WTC11 (cell line): ENCODE measurements at regions of chr19 and their contacts with region 1.

Region 1: GRCh38 chr19:45439569-45440254 is 16.0 kb upstream of the ERCC1 start:
- DNase-seq: peak; percentile 79
- ATAC-seq: peak; percentile 7
- H3K4me3 Mint-ChIP-seq: peak overlapping the region; percentile 69
- H3K27ac Mint-ChIP-seq: no peak overlapping the region
- H3K4me1 Mint-ChIP-seq: peaks cover 26% of the 10 kb centered on the region
- H3K27me3 Mint-ChIP-seq: peaks cover 27% of the 10 kb centered on the region
- CTCF ChIP-seq: peak; percentile 100

Region 2: DNA sequence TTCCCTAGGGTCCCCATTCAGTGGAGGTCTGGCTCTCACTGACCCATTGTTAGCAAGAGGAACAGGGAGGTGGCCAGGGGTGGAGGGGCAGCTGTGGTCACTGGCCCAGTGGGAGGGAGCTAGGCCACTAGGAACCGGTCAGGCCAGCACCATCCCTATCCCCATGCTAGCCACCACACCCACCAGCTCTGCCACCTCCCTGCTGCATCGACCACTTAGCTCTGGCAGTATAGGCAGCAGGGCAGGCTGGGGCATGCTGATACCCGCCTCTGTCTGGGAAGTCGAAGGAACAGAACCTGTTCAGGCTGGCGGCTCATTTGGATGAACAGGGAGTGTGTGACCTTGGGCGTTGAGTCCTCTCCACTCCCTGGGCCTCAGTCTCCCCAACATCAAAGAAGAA is 39.5 kb before region 1 on chr19:
- CTCF ChIA-PET with region 1: interaction called, 17 read pairs
- POLR2A ChIA-PET with region 1: no interaction called
- DNase-seq: no peak
- ATAC-seq: no peak
- H3K4me3 Mint-ChIP-seq: no peak overlapping the region
- H3K27ac Mint-ChIP-seq: no peak overlapping the region
- H3K4me1 Mint-ChIP-seq: peaks cover 32% of the 10 kb centered on the region
- H3K27me3 Mint-ChIP-seq: peaks cover 42% of the 10 kb centered on the region
- CTCF ChIP-seq: no peak

Region 3: GRCh38 chr19:45423589-45424190 is 16.0 kb before region 1 on chr19 and contains the start of gene ERCC1:
- CTCF ChIA-PET with region 1: interaction called, 42 read pairs
- POLR2A ChIA-PET with region 1: interaction called, 5 read pairs
- DNase-seq: peak; percentile 100
- ATAC-seq: peak; percentile 90
- H3K4me3 Mint-ChIP-seq: peak within 1 kb of the TSS; percentile 93
- H3K27ac Mint-ChIP-seq: peak within 1 kb of the TSS; percentile 99
- H3K4me1 Mint-ChIP-seq: peaks cover 21% of the 10 kb centered on the region
- H3K27me3 Mint-ChIP-seq: no peaks in the 10 kb centered on the region
- CTCF ChIP-seq: no peak
- total RNA-seq, gene ERCC1: 43.7 to 60.6 TPM (median 60.1 TPM) in 3 replicates

Region 4: GRCh38 chr19:45469132-45469944 is 29.6 kb after region 1 on chr19:
- CTCF ChIA-PET with region 1: interaction called, 105 read pairs
- POLR2A ChIA-PET with region 1: interaction called, 4 read pairs
- DNase-seq: peak; percentile 94
- ATAC-seq: peak; percentile 75
- H3K4me3 Mint-ChIP-seq: peak overlapping the region; percentile 87
- H3K27ac Mint-ChIP-seq: peak overlapping the region; percentile 96
- H3K4me1 Mint-ChIP-seq: peaks cover 32% of the 10 kb centered on the region
- H3K27me3 Mint-ChIP-seq: peaks cover 81% of the 10 kb centered on the region
- CTCF ChIP-seq: no peak

Region 5: DNA sequence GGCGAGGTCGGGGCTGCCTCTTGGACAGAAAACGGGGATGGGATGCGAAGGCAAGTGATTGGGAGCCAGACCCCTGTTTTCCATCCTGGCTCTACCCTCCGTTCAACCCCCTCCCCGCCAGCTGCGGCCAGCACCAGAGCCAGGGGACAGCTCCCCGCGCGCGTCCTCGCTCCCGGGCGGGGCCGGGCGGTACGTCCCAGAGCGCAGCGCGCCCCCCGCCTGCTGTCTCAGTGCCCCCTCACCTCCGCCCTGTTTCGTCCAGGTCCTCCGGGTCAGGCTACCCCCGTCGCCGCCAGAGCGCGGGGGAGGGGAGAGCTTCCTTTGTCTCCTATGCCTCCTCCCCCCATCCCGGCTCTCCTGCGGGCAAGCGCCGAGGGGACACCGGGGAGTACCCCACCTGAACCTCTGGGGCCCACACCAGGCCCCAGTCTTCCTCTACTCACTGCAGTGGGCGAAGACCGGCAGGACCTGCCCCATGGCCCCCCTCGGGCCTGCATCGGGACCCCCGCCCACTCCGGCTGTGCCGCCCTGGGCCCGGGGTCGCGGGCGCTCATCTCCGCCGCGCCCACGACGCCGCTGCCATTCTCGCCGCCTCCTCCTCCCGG is 56.7 kb after region 1 on chr19:
- CTCF ChIA-PET with region 1: interaction called, 20 read pairs
- POLR2A ChIA-PET with region 1: no interaction called
- DNase-seq: peak; percentile 84
- ATAC-seq: peak; percentile 1
- H3K4me3 Mint-ChIP-seq: peak overlapping the region; percentile 63
- H3K27ac Mint-ChIP-seq: no peak overlapping the region
- H3K4me1 Mint-ChIP-seq: peaks cover 43% of the 10 kb centered on the region
- H3K27me3 Mint-ChIP-seq: peaks cover 39% of the 10 kb centered on the region
- CTCF ChIP-seq: no peak

Region 6: DNA sequence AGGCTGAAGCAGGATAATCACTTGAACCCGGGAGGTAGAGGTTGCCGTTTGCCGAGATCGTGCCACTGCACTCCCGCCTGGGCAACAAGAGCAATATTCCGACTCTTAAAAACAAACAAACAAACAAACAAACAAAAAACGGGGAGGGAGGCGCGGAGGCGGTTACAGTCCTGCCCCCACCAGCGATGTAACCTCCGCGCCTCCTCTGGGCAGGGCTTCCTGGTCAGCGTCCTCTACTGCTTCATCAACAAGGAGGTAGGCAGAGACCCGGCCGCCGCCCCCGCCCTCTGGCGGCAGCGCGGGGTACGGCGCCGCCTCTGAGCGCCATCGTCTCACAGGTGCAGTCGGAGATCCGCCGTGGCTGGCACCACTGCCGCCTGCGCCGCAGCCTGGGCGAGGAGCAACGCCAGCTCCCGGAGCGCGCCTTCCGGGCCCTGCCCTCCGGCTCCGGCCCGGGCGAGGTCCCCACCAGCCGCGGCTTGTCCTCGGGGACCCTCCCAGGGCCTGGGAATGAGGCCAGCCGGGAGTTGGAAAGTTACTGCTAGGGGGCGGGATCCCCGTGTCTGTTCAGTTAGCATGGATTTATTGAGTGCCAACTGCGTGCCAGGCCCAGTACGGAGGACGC is 241.8 kb after region 1 on chr19:
- CTCF ChIA-PET with region 1: interaction called, 13 read pairs
- POLR2A ChIA-PET with region 1: no interaction called
- DNase-seq: peak; percentile 93
- ATAC-seq: peak; percentile 53
- H3K4me3 Mint-ChIP-seq: peak overlapping the region; percentile 65
- H3K27ac Mint-ChIP-seq: no peak overlapping the region
- H3K4me1 Mint-ChIP-seq: peaks cover 14% of the 10 kb centered on the region
- H3K27me3 Mint-ChIP-seq: peaks cover 38% of the 10 kb centered on the region
- CTCF ChIP-seq: peak; percentile 96